Transverse colon (tissue), 4 donors: ENCODE measurements at regions of chr19 and their contacts with region 1.

Region 1: GRCh38 chr19:548841-549830 is 5.3 kb downstream of the GZMM start:
- DNase-seq: no peak
- H3K4me3 ChIP-seq: no peak overlapping the region
- H3K27ac ChIP-seq: no peak overlapping the region
- H3K4me1 ChIP-seq: peaks cover 0 to 21% (median 12%) of the 10 kb centered on the region in 4 donors
- H3K27me3 ChIP-seq: no peaks in the 10 kb centered on the region
- CTCF ChIP-seq: no peak
- EP300 ChIP-seq: no peak
- POLR2A ChIP-seq: no peak

Region 2: DNA sequence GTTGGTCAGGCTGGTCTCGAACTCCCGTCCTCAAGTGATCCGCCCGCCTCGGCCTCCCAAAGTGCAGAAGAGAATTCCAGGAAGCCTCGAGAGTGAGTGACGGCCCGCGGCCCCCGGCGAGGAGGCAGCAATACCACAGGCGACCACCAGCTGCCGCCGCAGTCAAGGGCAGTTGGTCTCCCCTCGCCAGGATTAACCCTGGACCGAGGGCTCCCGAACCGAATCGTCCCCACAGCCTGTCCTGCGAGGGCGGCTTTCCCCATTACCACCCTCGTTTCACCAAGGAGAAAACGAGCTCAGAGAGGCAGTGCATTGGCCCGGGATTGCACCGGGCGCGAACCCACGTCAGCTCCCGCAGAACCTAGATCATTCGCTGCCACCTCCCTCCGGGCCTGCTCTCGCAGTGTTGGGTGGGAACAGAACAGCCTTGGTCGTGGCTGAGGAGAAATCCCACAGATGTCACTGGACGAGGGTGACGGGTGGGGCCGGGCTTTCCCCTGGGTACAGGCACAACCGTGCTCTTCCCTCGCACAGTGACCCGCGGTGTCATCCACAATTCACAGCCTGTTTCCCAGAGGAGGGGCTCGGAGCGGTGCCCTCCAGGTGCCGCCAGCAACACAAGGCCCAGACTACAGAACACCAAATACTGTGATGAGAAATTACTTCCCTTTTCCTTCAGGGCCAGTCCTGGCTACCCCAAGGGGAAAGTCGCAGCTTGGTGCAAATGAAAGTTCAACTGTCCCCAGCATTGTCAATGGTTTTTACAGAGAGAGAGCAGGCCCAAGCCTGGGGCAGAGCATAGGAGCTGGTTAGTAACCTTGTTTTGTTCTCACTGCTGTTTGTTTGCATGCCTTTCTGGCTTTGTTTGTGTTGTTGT is 165.0 kb before region 1 on chr19:
- in situ Hi-C with region 1: no loop called
- intact Hi-C with region 1: no loop called
- DNase-seq: no peak
- H3K4me3 ChIP-seq: no peak overlapping the region
- H3K27ac ChIP-seq: no peak overlapping the region
- H3K4me1 ChIP-seq: no peaks in the 10 kb centered on the region
- H3K27me3 ChIP-seq: peaks cover 40% of the 10 kb centered on the region
- CTCF ChIP-seq: peak; percentile 47 to 55 (median 49)
- EP300 ChIP-seq: no peak
- POLR2A ChIP-seq: no peak

Region 3: GRCh38 chr19:510606-511100 is 38.5 kb before region 1 on chr19:
- in situ Hi-C with region 1: no loop called
- intact Hi-C with region 1: loop called (anchors 1 kb)
- DNase-seq: peak; percentile 87
- H3K4me3 ChIP-seq: peak overlapping the region in 1 of 4 donors; percentile 22
- H3K27ac ChIP-seq: peak overlapping the region; percentile 75 to 81 (median 78)
- H3K4me1 ChIP-seq: peaks cover 18 to 44% (median 36%) of the 10 kb centered on the region in 4 donors
- H3K27me3 ChIP-seq: no peaks in the 10 kb centered on the region
- CTCF ChIP-seq: peak; percentile 94 to 98 (median 95)
- EP300 ChIP-seq: no peak
- POLR2A ChIP-seq: no peak